Mammary epithelial cell (primary cell): ENCODE measurements at regions of chr3 and their contacts with region 1.

Region 1: DNA sequence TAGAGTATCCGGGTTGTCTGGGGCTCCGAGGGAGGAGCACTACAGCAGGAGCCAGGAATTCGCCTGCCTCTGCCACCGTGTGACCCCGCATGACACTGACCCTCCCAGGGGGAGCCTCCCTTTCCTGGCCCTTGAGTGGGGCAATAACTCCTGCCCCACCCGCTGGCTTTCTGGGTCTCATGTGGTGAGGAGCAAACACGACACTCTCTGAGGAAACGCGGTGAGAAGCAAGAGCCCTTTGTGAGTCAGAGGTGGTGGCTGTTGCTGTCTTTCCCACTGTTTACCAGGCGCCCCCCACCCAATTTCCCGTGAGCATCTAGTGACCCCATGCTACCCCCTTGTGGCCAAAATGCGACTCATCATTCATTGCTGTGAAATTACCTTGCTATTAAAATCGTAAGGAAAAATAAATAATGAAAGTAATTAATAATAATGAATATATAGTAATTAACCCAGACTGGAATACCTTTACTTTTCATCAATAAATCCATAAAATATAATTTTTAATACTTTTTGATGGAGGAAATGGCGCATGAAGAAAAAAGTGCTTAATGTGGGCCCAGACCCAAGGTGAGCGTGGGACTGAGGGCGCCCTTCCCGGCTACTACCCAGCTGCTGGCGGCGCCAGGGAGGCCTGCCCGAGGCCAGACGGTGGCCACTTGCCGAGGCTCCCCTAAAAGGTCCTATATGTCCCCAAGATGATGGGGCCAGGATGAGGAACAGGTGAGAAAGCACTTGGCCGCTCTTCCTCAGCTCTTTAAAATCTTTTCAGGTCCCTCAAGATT is 29.3 kb downstream of the CCNL1 start:
- DNase-seq: peak; percentile 91
- H3K4me3 ChIP-seq: no peak overlapping the region
- H3K27ac ChIP-seq: peak overlapping the region; percentile 98
- H3K4me1 ChIP-seq: peaks cover 96% of the 10 kb centered on the region
- H3K27me3 ChIP-seq: no peaks in the 10 kb centered on the region
- CTCF ChIP-seq: peak; percentile 54 to 69

Region 2: GRCh38 chr3:156382458-156383346 is 748.0 kb before region 1 on chr3:
- CTCF ChIA-PET with region 1: no interaction called
- dilution Hi-C with region 1: no loop called
- in situ Hi-C with region 1: no loop called
- intact Hi-C with region 1: loop called (anchors 10 kb)
- DNase-seq: peak; percentile 20
- H3K4me3 ChIP-seq: no peak overlapping the region
- H3K27ac ChIP-seq: no peak overlapping the region
- H3K4me1 ChIP-seq: no peaks in the 10 kb centered on the region
- H3K27me3 ChIP-seq: no peaks in the 10 kb centered on the region
- CTCF ChIP-seq: peak; percentile 74 to 79

Region 3: DNA sequence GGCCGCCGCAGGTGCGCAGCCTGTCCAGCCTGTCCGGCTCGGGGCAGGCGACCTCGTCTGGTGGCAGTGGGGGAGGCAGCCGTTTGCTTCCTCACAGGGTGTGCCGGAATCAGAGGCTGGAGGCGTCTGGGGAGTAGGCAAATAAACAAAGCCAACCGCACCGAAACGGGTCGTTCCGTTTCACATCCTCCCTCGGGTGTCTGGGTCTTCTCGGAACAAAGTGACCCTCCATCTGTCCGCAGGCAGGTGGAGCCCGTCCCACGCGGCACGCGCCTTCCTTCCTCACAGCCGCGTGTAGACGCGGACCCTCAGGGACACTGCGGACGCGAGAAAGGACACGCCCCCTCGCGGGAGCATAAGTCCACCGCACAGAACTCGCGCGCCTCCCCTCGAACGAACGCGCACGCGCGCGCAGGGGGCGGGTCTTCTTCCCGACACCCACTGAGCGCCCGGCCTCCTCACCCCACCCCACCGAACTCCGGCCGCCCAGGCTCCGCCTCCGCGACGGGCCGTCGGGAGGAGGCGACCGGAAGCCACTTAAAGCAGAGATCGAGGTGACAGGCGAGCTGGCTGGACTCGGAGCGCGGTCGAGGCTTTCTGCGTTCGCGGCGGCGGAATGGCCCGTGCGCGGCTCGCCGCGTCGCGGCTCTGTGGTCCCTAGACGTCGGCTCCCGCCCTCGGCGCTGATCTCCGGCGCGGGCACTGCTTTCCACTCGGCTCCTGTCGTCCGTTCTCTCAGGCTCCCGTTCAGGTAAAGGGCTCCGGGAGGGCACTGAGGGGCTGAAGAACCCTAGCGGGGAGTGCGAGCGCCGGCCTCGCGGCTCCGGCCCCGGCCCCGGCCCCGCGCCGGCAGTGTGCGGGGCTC is 456.4 kb before region 1 on chr3 and contains the start of gene TIPARP:
- CTCF ChIA-PET with region 1: no interaction called
- dilution Hi-C with region 1: loop called (anchors 5 kb)
- in situ Hi-C with region 1: no loop called
- intact Hi-C with region 1: loop called (anchors 1 kb)
- DNase-seq: peak; percentile 98
- H3K4me3 ChIP-seq: peak within 1 kb of the TSS; percentile 61 to 94 (median 76)
- H3K27ac ChIP-seq: peak within 1 kb of the TSS; percentile 99
- H3K4me1 ChIP-seq: peaks cover 22% of the 10 kb centered on the region
- H3K27me3 ChIP-seq: no peaks in the 10 kb centered on the region
- CTCF ChIP-seq: peak; percentile 5 to 44
- total RNA-seq, gene TIPARP: 171 to 229 TPM

Region 4: GRCh38 chr3:156787926-156788663 is 342.6 kb before region 1 on chr3:
- CTCF ChIA-PET with region 1: no interaction called
- dilution Hi-C with region 1: loop called (anchors 10 kb)
- in situ Hi-C with region 1: no loop called
- intact Hi-C with region 1: loop called (anchors 1 kb)
- DNase-seq: peak; percentile 97
- H3K4me3 ChIP-seq: no peak overlapping the region
- H3K27ac ChIP-seq: peak overlapping the region; percentile 99
- H3K4me1 ChIP-seq: peaks cover 60% of the 10 kb centered on the region
- H3K27me3 ChIP-seq: no peaks in the 10 kb centered on the region
- CTCF ChIP-seq: peak in 1 of 2 donors; percentile 6

Region 5: DNA sequence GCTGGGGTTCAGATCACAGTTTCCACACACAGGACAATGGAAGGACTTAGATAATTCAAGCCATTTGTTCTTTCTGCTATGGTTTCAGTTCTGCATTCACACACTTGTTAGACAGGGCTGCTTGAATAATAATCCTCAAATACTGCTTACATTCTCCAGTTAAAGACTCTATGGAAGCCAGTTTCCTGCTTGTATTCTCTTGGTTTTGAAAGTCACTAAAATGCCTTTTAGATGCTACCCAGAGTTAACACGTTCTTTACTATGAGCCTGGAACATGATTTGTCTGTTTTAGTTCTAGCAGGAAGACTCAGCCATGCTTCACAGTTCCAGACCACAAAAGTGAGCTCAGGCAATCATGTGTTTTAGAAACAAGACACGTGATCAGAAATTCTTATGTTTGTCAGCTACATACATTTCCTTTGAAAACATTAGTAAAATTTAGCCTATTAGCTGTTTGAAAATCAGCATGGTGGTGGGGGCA is 152.1 kb before region 1 on chr3:
- CTCF ChIA-PET with region 1: no interaction called
- dilution Hi-C with region 1: no loop called
- in situ Hi-C with region 1: no loop called
- intact Hi-C with region 1: loop called (anchors 10 kb)
- DNase-seq: no peak
- H3K4me3 ChIP-seq: no peak overlapping the region
- H3K27ac ChIP-seq: no peak overlapping the region
- H3K4me1 ChIP-seq: peaks cover 4% of the 10 kb centered on the region
- H3K27me3 ChIP-seq: no peaks in the 10 kb centered on the region
- CTCF ChIP-seq: no peak

Region 6: DNA sequence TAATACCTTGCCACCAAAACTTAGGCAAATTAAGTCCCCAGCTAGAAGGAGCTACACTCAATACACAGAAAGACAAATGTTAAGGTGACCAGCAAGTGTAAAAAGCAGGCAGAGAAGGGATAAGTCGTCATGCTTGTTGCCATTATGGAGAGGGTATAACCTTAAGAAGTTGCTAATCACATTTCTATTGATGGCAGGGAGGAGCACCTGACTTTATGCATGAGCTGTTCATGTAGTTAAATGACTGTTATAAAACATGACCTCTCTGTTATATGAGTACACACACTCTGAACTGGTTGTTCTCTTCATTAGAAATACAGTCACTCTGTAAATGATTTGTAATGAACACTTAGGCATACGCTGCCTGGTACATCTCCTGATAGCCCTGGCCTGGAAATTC is 35.9 kb after region 1 on chr3:
- CTCF ChIA-PET with region 1: no interaction called
- dilution Hi-C with region 1: no loop called
- in situ Hi-C with region 1: no loop called
- intact Hi-C with region 1: no loop called
- DNase-seq: no peak
- H3K4me3 ChIP-seq: no peak overlapping the region
- H3K27ac ChIP-seq: no peak overlapping the region
- H3K4me1 ChIP-seq: no peaks in the 10 kb centered on the region
- H3K27me3 ChIP-seq: no peaks in the 10 kb centered on the region
- CTCF ChIP-seq: no peak